GM12878 (cell line): ENCODE measurements at regions of chr6 and their contacts with region 1.

Region 1: DNA sequence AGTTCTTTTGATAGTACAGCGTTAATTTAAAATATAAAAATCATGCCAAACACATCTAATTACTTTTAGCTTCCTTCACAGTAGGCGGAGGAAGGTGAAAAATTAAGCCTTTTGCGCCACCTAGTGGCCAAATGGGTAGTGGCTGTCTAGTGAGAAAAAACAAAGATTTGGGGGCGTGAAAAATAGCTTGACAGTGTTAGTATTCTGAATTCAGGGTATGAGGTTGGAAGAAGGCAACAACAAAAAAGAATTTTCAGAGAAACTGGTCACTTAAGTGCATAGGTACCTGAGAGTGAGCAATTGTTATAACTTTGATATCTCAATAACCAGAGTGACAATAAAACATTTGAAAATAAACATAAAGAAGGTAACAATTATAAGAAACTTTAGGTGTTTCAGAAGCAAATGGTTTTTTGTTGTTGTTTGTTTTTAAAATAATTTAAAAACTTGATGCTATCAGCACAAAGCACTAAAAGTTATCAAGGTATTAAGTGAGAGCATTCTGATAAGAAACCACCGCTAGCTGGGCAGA is 14.3 kb downstream of the PSMB9 start:
- DNase-seq: no peak
- ATAC-seq: peak; percentile 88
- H3K4me3 ChIP-seq: no peak overlapping the region
- H3K27ac ChIP-seq: no peak overlapping the region
- H3K4me1 ChIP-seq: peaks cover 23% of the 10 kb centered on the region
- H3K27me3 ChIP-seq: no peaks in the 10 kb centered on the region
- CTCF ChIP-seq: peak; percentile 67 to 85 (median 85)
- EP300 ChIP-seq: no peak
- POLR2A ChIP-seq: no peak
- RAD21 ChIP-seq: peak; percentile 84

Region 2: DNA sequence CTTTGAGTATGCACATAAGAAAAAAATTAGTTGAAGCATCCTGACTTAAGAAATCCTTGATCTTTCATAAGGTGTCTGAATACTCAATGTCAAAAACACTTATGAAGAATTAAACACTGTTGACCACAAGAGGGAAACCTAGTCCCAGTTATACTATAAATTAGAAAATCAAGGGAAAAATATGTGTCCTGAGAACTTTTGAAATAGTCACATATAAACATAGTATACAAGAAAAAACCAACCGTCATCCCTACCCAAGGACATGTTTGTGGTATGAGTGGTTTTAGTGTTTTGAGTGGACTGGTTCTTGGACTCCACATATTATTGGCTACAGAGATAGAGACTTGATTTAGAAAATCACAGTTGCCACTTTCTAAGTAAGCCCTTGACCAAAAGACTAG is 436.3 kb before region 1 on chr6:
- CTCF ChIA-PET with region 1: interaction called, 9 read pairs
- POLR2A ChIA-PET with region 1: interaction called, 5 read pairs
- RAD21 ChIA-PET with region 1: interaction called, 7 read pairs
- SMC1A ChIA-PET with region 1: interaction called, 19 read pairs
- in situ Hi-C with region 1: no loop called
- intact Hi-C with region 1: loop called (anchors 5 kb)
- DNase-seq: no peak
- ATAC-seq: peak; percentile 55
- H3K4me3 ChIP-seq: no peak overlapping the region
- H3K27ac ChIP-seq: no peak overlapping the region
- H3K4me1 ChIP-seq: peaks cover 10% of the 10 kb centered on the region
- H3K27me3 ChIP-seq: no peaks in the 10 kb centered on the region
- CTCF ChIP-seq: peak in 2 of 3 experiments; percentile 41 to 62; a peak in 4 of 6 replicates
- EP300 ChIP-seq: no peak
- POLR2A ChIP-seq: no peak
- RAD21 ChIP-seq: peak; percentile 76

Region 3: GRCh38 chr6:32785781-32786533 is 82.4 kb before region 1 on chr6:
- CTCF ChIA-PET with region 1: interaction called, 78 read pairs
- POLR2A ChIA-PET with region 1: no interaction called
- RAD21 ChIA-PET with region 1: interaction called, 40 read pairs
- SMC1A ChIA-PET with region 1: interaction called, 42 read pairs
- in situ Hi-C with region 1: no loop called
- intact Hi-C with region 1: no loop called
- DNase-seq: peak; percentile 27
- ATAC-seq: peak; percentile 94
- H3K4me3 ChIP-seq: no peak overlapping the region
- H3K27ac ChIP-seq: no peak overlapping the region
- H3K4me1 ChIP-seq: no peaks in the 10 kb centered on the region
- H3K27me3 ChIP-seq: no peaks in the 10 kb centered on the region; a peak in 1 of 4 replicates
- CTCF ChIP-seq: peak; percentile 64 to 78 (median 69)
- EP300 ChIP-seq: no peak
- POLR2A ChIP-seq: no peak
- RAD21 ChIP-seq: peak; percentile 80

Region 4: DNA sequence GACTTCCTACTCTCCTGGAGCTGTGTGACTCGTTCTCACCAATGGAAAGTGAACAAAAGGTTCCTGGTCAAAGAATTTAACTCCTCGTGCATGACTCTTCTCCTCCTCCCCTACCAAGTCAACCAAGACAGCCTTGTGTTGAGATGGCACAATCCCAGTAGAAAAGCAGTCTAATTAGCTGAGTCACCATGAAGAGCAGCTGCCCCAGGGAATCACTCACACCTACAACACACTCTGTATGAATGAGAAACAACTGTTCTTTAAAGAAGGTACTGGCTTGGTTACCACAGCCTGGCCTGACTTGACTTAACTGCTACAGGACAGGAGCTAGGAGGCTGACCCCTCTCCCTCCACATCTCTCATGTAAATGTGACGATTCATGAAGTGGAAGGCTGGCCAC is 48.6 kb before region 1 on chr6:
- CTCF ChIA-PET with region 1: interaction called, 22 read pairs
- POLR2A ChIA-PET with region 1: interaction called, 8 read pairs
- RAD21 ChIA-PET with region 1: interaction called, 15 read pairs
- SMC1A ChIA-PET with region 1: interaction called, 7 read pairs
- in situ Hi-C with region 1: no loop called
- intact Hi-C with region 1: no loop called
- DNase-seq: no peak
- ATAC-seq: no peak
- H3K4me3 ChIP-seq: no peak overlapping the region
- H3K27ac ChIP-seq: no peak overlapping the region
- H3K4me1 ChIP-seq: peaks cover 23% of the 10 kb centered on the region
- H3K27me3 ChIP-seq: no peaks in the 10 kb centered on the region
- CTCF ChIP-seq: no peak
- EP300 ChIP-seq: no peak
- POLR2A ChIP-seq: no peak
- RAD21 ChIP-seq: no peak

Region 5: DNA sequence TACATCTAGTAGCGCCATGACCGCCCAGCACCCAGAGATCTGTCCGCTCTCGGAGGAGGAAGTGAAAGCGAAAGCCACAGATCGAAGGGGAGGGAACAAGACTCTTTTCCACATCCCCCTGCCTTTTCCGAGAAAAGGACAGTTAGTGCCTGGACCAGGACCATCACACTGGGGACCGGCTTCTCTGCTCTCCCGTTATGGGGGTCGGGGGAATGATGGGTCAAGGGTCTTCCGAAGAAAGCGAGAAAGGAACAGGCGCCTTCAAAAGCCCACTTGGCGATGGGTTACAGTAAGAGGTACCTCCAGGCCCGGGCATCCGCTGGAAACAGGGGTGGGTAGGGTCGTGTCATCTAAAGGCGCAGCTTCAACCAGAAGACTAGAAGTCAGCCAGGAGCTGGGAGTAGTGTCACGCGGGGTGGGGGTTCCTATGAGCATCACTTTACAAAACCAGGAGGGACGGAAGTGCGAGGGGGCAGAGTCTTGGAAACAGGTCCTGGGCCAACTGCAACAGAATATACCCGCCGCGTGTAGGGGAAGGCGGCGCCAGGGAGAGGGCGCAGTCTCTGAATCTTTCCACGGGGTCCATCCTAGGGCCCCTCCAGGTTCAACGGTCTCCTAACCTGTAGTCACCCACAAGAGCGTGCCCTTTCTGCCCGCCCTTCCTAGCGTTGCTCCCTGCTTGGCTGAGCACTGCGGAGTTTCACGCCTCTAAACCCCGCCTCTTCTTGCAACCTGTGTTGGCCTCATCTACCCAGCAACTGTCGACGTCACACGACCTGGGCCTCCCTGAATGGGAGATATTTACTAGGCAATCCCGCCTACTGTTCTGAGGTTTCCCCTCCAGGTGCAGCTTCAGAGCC is 24.1 kb before region 1 on chr6 and contains the start of gene PSMB8:
- CTCF ChIA-PET with region 1: interaction called, 311 read pairs
- POLR2A ChIA-PET with region 1: interaction called, 56 read pairs
- RAD21 ChIA-PET with region 1: interaction called, 236 read pairs
- SMC1A ChIA-PET with region 1: interaction called, 226 read pairs
- in situ Hi-C with region 1: no loop called
- intact Hi-C with region 1: no loop called
- DNase-seq: peak; percentile 98
- ATAC-seq: peak; percentile 75
- H3K4me3 ChIP-seq: peak within 1 kb of the TSS; percentile 96
- H3K27ac ChIP-seq: peak within 1 kb of the TSS; percentile 96
- H3K4me1 ChIP-seq: peaks cover 67% of the 10 kb centered on the region
- H3K27me3 ChIP-seq: no peaks in the 10 kb centered on the region
- CTCF ChIP-seq: no peak
- EP300 ChIP-seq: peak in 1 of 2 experiments; percentile 57; a peak in 1 of 4 replicates
- POLR2A ChIP-seq: peak; percentile 81
- RAD21 ChIP-seq: no peak
- polyA plus RNA-seq, gene PSMB8: 353 to 557 TPM

Region 6: GRCh38 chr6:32933636-32934085 is 65.3 kb after region 1 on chr6:
- CTCF ChIA-PET with region 1: interaction called, 11 read pairs
- POLR2A ChIA-PET with region 1: interaction called, 4 read pairs
- RAD21 ChIA-PET with region 1: no interaction called
- SMC1A ChIA-PET with region 1: interaction called, 8 read pairs
- in situ Hi-C with region 1: no loop called
- intact Hi-C with region 1: no loop called
- DNase-seq: peak; percentile 38
- ATAC-seq: peak; percentile 70
- H3K4me3 ChIP-seq: no peak overlapping the region
- H3K27ac ChIP-seq: no peak overlapping the region
- H3K4me1 ChIP-seq: peaks cover 11% of the 10 kb centered on the region
- H3K27me3 ChIP-seq: no peaks in the 10 kb centered on the region; a peak in 1 of 4 replicates
- CTCF ChIP-seq: peak; percentile 75 to 85 (median 82)
- EP300 ChIP-seq: no peak
- POLR2A ChIP-seq: peak; percentile 46; the same call in 1 of the 2 replicates
- RAD21 ChIP-seq: peak; percentile 76

Region 7: DNA sequence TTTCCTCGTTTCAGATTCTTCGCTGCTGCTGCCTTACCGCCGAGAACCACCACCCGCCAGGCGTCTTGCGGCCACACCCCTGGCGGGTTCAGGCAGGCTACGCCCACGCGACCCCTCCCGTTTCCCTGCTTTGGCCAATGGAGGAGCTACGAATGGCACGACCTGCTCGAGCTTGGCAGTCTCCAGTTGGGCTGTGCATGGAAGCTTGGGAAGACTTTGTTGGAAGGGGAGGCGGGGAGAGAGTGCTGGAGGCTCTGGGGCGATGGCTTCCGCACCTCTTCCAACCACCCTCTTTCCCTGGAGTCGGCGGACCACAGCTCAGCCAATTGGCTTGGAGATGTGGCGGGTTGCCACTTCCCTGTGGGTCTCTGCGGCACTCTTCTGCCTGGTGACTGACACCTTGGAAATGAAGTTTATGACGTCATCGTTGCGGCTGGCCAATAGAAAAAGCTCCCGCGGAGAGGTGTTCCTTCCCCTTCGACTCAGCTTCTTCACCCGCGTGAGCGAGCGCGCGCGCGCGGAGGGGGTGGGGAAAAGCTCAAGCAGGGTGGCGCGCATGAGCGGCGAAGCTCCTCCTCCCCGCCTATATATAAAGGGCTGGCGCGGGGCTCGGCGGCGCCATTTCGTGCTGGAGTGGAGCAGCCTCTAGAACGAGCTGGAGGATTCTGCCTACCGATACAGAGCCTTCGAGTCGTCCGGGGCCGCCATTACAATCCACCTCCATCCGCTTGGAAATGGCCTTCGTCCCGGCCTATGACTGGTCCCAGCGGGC is 103.4 kb after region 1 on chr6:
- CTCF ChIA-PET with region 1: interaction called, 10 read pairs
- POLR2A ChIA-PET with region 1: interaction called, 5 read pairs
- RAD21 ChIA-PET with region 1: interaction called, 4 read pairs
- SMC1A ChIA-PET with region 1: interaction called, 8 read pairs
- in situ Hi-C with region 1: no loop called
- intact Hi-C with region 1: no loop called
- DNase-seq: peak; percentile 100
- ATAC-seq: peak; percentile 46
- H3K4me3 ChIP-seq: peak overlapping the region; percentile 93
- H3K27ac ChIP-seq: peak overlapping the region; percentile 100
- H3K4me1 ChIP-seq: peaks cover 1% of the 10 kb centered on the region; the same call in 1 of the 2 replicates
- H3K27me3 ChIP-seq: no peaks in the 10 kb centered on the region
- CTCF ChIP-seq: no peak
- EP300 ChIP-seq: peak; percentile 37; a peak in 2 of 4 replicates
- POLR2A ChIP-seq: peak; percentile 70
- RAD21 ChIP-seq: no peak